Cardiac septum (tissue), 1 donor: ENCODE measurements at regions of chr2 and their contacts with region 1.

Region 1: GRCh38 chr2:210913461-210913860 is 357.1 kb downstream of the CPS1 start:
- DNase-seq: no peak

Region 2: GRCh38 chr2:210707900-210708299 is 205.6 kb before region 1 on chr2:
- intact Hi-C with region 1: loop called (anchors 5 kb)
- DNase-seq: no peak

Region 3: DNA sequence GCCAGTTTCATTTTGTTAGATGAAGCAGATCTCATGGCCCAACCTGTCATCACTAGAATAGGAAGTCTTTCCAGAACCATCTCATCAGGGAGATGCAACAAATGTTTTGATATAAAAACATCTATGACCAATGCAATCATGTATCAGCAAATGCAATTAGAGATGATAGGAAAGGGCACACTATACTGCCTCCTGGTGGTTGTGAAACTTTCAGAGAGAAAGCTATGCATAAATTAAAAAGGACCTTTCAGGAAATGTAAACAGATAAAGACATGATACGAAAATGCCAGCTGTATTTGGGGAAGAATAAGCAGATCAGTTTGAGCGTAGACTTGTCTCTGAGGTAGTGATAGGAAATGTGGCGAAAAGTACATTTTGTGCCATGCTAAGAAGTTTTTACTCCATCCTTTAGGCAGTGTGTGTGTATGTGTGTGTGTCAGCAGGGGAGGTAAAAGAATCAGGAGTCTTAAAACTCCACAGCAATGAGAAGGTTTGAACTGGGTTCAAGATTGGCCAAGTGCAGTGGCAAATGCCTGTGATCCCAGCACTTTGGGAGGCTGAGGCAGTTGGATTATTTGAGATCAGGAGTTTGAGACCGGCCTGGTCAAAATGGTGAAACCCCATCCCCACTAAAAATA is 122.2 kb after region 1 on chr2:
- intact Hi-C with region 1: no loop called
- DNase-seq: no peak